ENCODE measurements at regions of chr15 and their contacts with region 1.

Region 1: DNA sequence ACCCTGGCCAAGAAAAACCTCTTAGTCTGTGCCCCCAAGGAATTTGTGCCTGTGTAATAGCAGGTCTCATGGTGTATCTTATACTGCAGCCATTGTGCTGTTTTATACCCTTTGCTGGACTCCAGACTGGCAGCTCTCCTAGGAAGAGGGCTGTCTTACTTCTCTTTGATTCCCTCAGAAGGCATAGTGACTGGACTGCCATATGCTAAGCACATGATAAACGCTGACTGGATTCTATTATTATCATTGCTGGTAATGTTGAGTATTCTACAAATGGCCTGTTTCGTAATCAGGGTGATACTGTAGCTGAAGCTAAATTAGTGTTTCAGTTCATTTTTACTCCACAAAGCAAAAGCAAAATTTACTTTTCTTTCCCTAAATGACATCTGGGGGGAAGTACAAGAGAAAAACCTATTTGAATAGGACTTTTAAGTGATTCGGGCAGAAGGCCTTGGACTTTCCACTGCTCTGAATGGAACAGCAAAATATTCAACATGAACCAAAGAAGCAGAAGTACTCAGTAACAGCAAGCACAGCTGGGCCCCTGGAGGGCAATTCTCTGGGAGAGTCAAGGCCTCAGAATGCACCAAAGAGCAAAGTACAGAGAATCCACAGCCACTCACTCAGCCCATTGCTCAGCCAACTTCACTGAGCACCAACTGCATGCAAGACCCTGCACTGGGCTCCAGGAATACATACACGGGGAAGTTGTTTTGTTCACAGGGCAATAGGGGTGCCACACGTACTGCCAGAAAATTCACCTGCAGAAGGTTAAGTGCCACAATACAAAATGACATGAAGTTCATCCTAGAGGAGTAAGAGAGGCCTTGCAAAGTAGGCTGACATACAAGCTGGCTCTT is 7.9 kb upstream of the BCL2A1 start:
- DNase-seq: peak; percentile 95
- ATAC-seq: peak; percentile 74
- H3K4me3 ChIP-seq: peak overlapping the region; percentile 47; the same call in 1 of the 2 replicates
- H3K27ac ChIP-seq: peak overlapping the region; percentile 99
- H3K4me1 ChIP-seq: peaks cover 71% of the 10 kb centered on the region
- H3K27me3 ChIP-seq: no peaks in the 10 kb centered on the region
- CTCF ChIP-seq: no peak
- EP300 ChIP-seq: peak; percentile 78 to 87; a peak in 2 of 4 replicates
- POLR2A ChIP-seq: no peak
- RAD21 ChIP-seq: peak; percentile 19; the same call in 1 of the 2 replicates

Region 2: DNA sequence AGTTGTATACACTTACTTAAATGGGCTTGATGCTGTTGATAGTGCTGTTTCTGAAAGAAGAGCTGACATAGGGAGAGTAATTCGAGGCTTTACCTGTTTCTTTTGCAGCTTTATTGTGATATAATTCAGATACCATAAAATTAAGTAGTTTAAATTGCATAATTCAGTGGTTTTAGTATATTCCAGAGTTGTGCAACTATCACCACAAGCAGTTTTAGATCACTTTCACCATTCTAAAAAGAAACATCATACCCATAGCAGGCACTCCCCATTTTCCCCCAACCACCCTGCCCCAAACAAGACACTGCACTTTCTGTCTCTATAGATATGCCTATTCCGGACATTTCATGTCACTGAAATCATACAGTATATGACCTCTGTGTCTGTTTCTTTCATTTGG is 180.6 kb before region 1 on chr15:
- CTCF ChIA-PET with region 1: no interaction called
- POLR2A ChIA-PET with region 1: no interaction called
- RAD21 ChIA-PET with region 1: no interaction called
- SMC1A ChIA-PET with region 1: no interaction called
- in situ Hi-C with region 1: no loop called
- intact Hi-C with region 1: no loop called
- DNase-seq: no peak
- ATAC-seq: no peak
- H3K4me3 ChIP-seq: no peak overlapping the region
- H3K27ac ChIP-seq: no peak overlapping the region
- H3K4me1 ChIP-seq: no peaks in the 10 kb centered on the region
- H3K27me3 ChIP-seq: no peaks in the 10 kb centered on the region
- CTCF ChIP-seq: no peak
- EP300 ChIP-seq: no peak
- POLR2A ChIP-seq: no peak
- RAD21 ChIP-seq: no peak

Region 3: GRCh38 chr15:79901958-79902357 is 76.9 kb before region 1 on chr15:
- CTCF ChIA-PET with region 1: interaction called, 8 read pairs
- POLR2A ChIA-PET with region 1: interaction called, 7 read pairs
- RAD21 ChIA-PET with region 1: interaction called, 19 read pairs
- SMC1A ChIA-PET with region 1: interaction called, 38 read pairs
- in situ Hi-C with region 1: no loop called
- intact Hi-C with region 1: no loop called
- DNase-seq: peak; percentile 90
- ATAC-seq: peak; percentile 42
- H3K4me3 ChIP-seq: no peak overlapping the region
- H3K27ac ChIP-seq: peak overlapping the region; percentile 36
- H3K4me1 ChIP-seq: peaks cover 33% of the 10 kb centered on the region
- H3K27me3 ChIP-seq: no peaks in the 10 kb centered on the region
- CTCF ChIP-seq: peak in 1 of 3 experiments; percentile 9; a peak in 1 of 6 replicates
- EP300 ChIP-seq: no peak
- POLR2A ChIP-seq: no peak
- RAD21 ChIP-seq: no peak

Region 4: DNA sequence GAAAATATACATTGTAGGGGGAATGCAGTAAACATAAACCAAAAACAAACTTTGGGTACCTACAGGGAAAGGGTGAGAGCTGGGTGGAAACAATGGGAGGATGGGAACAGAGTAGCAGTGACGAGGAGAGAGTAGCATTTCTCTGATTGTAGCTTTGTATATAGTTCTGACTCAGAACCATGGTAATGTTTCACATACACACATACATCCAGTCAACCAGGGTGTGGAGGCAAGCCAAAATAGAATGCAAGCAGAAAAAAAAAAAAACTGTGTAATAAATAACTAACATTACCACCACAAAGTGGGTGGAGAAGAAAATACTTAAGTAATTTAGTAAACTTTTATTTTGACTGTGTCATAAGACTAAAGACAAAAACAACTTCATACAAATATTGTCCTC is 35.1 kb before region 1 on chr15:
- CTCF ChIA-PET with region 1: no interaction called
- POLR2A ChIA-PET with region 1: interaction called, 25 read pairs
- RAD21 ChIA-PET with region 1: interaction called, 26 read pairs
- SMC1A ChIA-PET with region 1: interaction called, 9 read pairs
- in situ Hi-C with region 1: no loop called
- intact Hi-C with region 1: no loop called
- DNase-seq: no peak
- ATAC-seq: peak; percentile 84
- H3K4me3 ChIP-seq: no peak overlapping the region
- H3K27ac ChIP-seq: no peak overlapping the region
- H3K4me1 ChIP-seq: peaks cover 16% of the 10 kb centered on the region
- H3K27me3 ChIP-seq: no peaks in the 10 kb centered on the region
- CTCF ChIP-seq: no peak
- EP300 ChIP-seq: peak; percentile 72 to 89
- POLR2A ChIP-seq: no peak
- RAD21 ChIP-seq: no peak

Region 5: GRCh38 chr15:80010131-80010673 is 31.3 kb after region 1 on chr15:
- CTCF ChIA-PET with region 1: interaction called, 3 read pairs
- POLR2A ChIA-PET with region 1: interaction called, 7 read pairs
- RAD21 ChIA-PET with region 1: interaction called, 6 read pairs
- SMC1A ChIA-PET with region 1: interaction called, 7 read pairs
- in situ Hi-C with region 1: no loop called
- intact Hi-C with region 1: loop called (anchors 2 kb)
- DNase-seq: no peak
- ATAC-seq: peak; percentile 61
- H3K4me3 ChIP-seq: peak overlapping the region; percentile 32; the same call in 1 of the 2 replicates
- H3K27ac ChIP-seq: peak overlapping the region; percentile 93
- H3K4me1 ChIP-seq: peaks cover 43% of the 10 kb centered on the region
- H3K27me3 ChIP-seq: no peaks in the 10 kb centered on the region
- CTCF ChIP-seq: no peak
- EP300 ChIP-seq: no peak
- POLR2A ChIP-seq: no peak
- RAD21 ChIP-seq: no peak